ENCODE measurements at regions of chr1 and their contacts with region 1.

Region 1: GRCh38 chr1:37533317-37534093 is 18.9 kb upstream of the MEAF6 start:
- DNase-seq: no peak
- H3K4me3 ChIP-seq: no peak overlapping the region
- H3K27me3 ChIP-seq: no peaks in the 10 kb centered on the region
- CTCF ChIP-seq: no peak

Region 2: GRCh38 chr1:37514350-37515184 is 18.9 kb before region 1 on chr1 and contains the start of gene MEAF6:
- CTCF ChIA-PET with region 1: interaction called, 21 read pairs
- POLR2A ChIA-PET with region 1: no interaction called
- DNase-seq: no peak
- H3K4me3 ChIP-seq: peak within 1 kb of the TSS; percentile 82
- H3K27me3 ChIP-seq: no peaks in the 10 kb centered on the region
- CTCF ChIP-seq: no peak
- polyA plus RNA-seq, gene MEAF6: 43.1 and 49.6 TPM in 2 replicates